ENCODE measurements at regions of chr12 and their contacts with region 1.

Region 1: DNA sequence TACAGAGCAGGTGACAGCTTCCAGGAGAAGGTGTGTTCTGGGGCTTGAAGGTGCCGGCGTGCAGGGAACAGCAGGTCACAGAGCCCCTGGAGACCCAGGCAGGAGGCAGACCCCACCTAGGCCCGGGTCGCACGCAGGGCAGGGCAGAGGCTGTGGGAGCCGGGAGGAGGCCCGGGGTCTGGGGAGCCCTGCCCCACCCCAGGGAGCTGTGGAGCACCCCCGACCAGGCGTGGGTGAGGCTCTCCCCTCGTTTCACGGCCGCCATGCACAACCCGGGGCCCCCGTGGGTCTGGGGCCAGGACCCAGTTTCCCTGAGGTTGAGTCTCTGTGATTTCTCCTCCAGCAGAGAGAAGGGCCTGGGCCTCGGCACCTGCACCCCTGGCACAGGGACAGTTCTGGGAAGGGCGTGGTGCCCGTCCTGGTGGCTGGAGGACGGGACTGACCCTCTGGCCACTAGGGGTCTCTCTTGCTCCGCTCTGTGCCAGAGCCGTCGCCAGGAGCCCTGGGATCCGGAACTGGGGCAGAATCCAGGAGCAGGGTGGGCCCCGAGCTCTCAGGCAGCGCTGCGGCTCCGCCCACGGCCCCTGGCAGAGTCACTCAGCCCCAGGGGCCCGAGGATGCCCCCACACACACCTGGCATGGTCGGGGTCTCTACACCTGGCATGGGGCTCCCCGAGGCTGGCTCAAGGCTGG is 75.2 kb upstream of the FBRSL1 start:
- DNase-seq: peak; percentile 83 to 87 (median 87)
- ATAC-seq: peak; percentile 98
- H3K4me3 ChIP-seq: no peak overlapping the region
- H3K4me1 ChIP-seq: no peaks in the 10 kb centered on the region
- CTCF ChIP-seq: peak; percentile 90

Region 2: GRCh38 chr12:132285991-132286681 is 128.6 kb before region 1 on chr12:
- intact Hi-C with region 1: no loop called
- DNase-seq: peak; percentile 27 to 62 (median 59)
- ATAC-seq: peak; percentile 49
- H3K4me3 ChIP-seq: no peak overlapping the region
- H3K4me1 ChIP-seq: no peaks in the 10 kb centered on the region
- CTCF ChIP-seq: no peak

Region 3: DNA sequence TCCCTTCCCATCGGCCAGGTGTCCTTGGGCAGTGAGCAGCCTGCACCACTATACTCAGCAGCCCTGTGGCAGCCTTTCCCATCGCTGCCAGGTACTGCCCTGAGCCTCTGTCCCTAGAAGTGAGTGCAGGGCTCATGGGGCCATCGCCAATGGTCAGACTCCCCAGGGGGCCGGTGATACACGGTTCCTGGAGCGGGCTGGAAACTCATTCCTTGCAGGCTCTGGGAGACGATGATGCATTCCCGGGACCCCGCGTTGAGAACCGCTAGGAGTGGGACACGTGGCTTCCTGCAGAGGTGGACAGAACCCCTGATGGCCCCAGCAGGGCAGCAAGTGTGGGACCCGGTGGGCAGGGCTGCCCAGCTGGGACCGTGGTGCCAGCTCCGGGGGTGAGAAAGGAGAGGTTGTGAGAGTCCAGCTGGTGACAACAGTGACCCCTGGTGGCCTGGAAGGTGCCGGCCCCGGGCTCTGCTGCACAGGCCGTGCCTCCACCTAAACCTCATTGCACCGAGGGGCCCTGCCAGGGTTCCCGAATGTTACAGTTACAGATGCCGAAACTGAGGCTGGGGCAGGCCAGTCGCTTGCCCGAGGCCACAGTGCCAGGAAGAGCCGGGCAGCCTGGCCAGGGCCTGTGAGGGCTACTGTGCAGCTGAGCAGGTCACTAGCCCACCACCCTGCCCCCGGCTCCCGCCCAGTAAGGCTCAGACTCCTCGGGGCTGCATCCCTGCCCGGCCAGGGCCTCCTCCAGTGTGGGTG is 109.0 kb after region 1 on chr12:
- intact Hi-C with region 1: loop called (anchors 5 kb)
- DNase-seq: peak in 2 of 3 donors; percentile 81 to 91
- ATAC-seq: peak; percentile 78
- H3K4me3 ChIP-seq: no peak overlapping the region
- H3K4me1 ChIP-seq: no peaks in the 10 kb centered on the region
- CTCF ChIP-seq: peak; percentile 83

Region 4: DNA sequence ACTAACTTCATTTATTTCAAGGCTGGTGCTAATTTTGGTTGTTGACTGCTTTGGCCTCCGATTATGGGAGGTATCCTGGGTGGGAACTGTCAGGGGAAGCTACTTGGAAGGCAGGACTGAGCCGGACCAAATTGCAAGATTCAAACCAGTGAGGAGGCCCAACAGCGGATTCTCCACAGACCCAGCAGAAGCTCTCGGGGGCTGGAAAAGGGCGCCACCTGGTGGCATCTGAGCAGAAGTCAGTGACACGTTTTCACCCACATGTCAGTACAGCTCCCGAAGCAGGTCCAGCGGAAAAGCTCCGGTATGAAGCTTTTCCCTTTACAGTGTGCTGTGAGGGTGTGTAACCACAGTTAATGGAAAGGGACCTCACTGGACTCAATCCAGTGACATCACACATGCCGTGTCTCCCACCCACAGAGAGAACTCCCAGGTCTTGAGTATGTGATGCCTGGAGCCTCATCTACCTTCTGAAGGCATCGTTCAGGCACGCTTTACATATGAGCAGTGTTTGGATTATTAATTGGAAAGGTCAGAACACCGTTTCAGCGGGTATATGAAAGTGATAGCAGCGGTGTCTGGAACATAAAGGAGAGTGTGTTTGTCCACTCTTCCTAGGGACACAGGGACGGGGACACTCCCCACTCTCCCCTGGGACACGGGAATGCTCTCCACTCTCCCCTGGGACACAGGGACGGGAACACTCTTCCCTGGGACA is 200.2 kb after region 1 on chr12:
- intact Hi-C with region 1: loop called in 1 of 2 experiments (anchors 5 kb)
- DNase-seq: peak; percentile 78 to 87 (median 81)
- ATAC-seq: peak; percentile 93
- H3K4me3 ChIP-seq: no peak overlapping the region
- H3K4me1 ChIP-seq: peaks cover 4% of the 10 kb centered on the region
- CTCF ChIP-seq: peak; percentile 86

Region 5: DNA sequence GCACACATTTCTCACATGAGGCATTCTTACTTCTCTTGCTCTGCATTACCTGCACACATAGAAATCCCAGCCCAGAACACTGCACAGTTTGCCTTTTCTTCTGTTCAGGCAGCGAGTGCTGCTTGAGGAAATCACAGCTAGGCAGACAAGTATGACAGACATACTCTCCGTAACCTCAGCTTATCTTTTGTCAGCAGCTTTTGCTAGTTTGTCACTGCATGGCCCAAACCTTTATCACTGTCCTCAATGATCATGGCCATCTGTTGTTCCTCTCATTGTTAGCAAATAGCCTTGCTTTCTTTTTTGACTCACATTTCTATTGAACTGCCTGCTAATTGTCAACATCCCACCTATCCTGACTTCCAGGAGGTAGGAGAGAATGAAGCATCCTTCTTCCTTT is 721.0 kb after region 1 on chr12:
- intact Hi-C with region 1: no loop called
- DNase-seq: no peak
- ATAC-seq: no peak
- H3K4me3 ChIP-seq: no peak overlapping the region
- H3K4me1 ChIP-seq: peaks cover 4% of the 10 kb centered on the region
- CTCF ChIP-seq: no peak